ENCODE measurements at regions of chr17 and their contacts with region 1.

Region 1: DNA sequence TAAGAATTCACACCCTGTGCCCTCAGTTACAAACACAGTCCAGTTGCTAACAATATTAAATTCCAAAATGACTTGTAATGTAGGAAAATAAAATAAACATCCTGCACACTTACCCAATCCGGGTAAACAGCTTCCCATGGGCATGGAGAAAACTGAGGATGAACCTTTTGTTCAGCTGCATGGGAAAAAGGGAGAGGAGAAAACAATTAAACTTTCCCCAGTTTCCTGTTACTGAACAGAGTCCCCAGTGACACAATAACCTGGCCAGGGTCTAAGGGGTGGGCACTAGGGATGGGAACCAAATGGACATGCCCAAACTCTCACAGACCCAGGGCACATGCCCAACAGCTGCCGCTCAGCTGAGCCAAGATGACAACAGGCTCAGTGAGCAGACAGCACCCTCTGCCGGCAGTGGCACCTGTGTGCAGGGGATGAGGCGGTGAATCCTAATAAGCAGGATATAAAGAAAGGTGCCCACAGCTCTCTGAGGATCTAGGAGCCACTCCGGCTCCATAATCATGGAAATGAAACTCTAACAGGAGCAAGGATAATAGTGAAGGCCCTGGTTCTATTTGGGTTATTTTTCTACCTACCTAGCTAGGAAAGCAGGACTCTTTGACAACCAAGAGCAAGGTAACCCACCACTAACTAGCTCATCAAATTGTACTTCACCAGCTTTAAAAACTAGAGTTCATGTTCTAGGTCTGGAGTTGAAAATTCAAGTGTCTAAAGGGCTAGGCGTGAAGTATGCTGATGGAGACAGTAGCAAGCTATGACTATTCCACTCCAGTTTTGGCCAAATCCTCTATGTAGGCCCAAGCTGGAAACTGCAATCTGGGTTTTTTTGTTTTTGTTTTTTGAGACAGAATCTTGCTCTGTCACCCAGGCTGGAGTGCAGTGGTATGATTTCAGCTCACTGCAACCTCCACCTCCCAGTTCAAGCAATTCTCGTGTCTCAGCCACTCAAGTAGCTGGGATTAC is 58.8 kb downstream of the SMG6 start:
- DNase-seq: peak; percentile 75
- H3K4me3 Mint-ChIP-seq: no peak overlapping the region
- H3K27ac Mint-ChIP-seq: peak overlapping the region; percentile 76
- H3K4me1 Mint-ChIP-seq: peaks cover 70% of the 10 kb centered on the region
- H3K27me3 Mint-ChIP-seq: no peaks in the 10 kb centered on the region

Region 2: GRCh38 chr17:2070241-2071023 is 174.4 kb before region 1 on chr17:
- intact Hi-C with region 1: loop called (anchors 1 kb)
- DNase-seq: peak; percentile 68
- H3K4me3 Mint-ChIP-seq: peak overlapping the region; percentile 58
- H3K27ac Mint-ChIP-seq: peak overlapping the region; percentile 92
- H3K4me1 Mint-ChIP-seq: peaks cover 58% of the 10 kb centered on the region
- H3K27me3 Mint-ChIP-seq: no peaks in the 10 kb centered on the region

Region 3: GRCh38 chr17:2195729-2196128 is 49.1 kb before region 1 on chr17:
- intact Hi-C with region 1: loop called (anchors 1 kb)
- DNase-seq: peak; percentile 16
- H3K4me3 Mint-ChIP-seq: peak overlapping the region; percentile 1
- H3K27ac Mint-ChIP-seq: peak overlapping the region; percentile 70
- H3K4me1 Mint-ChIP-seq: peaks cover 47% of the 10 kb centered on the region
- H3K27me3 Mint-ChIP-seq: no peaks in the 10 kb centered on the region

Region 4: GRCh38 chr17:2215616-2216364 is 29.0 kb before region 1 on chr17:
- intact Hi-C with region 1: loop called (anchors 1 kb)
- DNase-seq: peak; percentile 69
- H3K4me3 Mint-ChIP-seq: peak overlapping the region; percentile 80
- H3K27ac Mint-ChIP-seq: peak overlapping the region; percentile 96
- H3K4me1 Mint-ChIP-seq: peaks cover 57% of the 10 kb centered on the region
- H3K27me3 Mint-ChIP-seq: no peaks in the 10 kb centered on the region

Region 5: DNA sequence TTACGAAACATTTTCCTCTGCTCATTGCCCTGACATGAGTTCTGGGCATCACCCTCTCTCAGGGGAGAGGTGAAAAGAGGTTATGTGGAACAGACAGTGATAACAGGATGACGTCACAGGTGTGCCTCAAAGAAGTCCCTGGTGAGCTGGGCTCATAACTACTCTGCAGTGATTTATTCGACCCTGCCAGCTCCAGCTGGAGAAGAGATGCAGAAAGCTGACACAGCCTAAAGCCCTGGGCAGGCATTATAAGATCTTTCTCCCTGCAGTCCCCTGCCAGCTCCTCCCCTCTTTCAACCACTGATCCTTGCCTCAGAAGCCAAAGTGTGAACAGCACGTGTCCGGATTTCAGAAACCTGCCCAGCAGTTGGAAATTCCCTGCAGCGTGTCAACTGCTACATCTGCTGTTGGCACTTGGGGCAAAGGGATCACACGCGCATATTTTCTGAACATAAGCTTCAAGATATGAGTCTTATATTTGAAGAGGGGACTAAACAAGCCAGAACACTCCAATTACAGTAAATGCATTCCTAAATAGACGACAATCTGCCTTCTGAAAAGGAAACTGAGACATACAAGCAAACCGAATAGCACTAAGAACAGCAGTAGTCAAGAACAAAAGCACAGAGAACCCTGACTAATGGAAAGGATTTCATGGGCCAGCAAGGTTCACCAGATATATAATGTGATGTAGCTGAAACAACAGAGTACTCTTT is 21.8 kb before region 1 on chr17:
- intact Hi-C with region 1: loop called (anchors 1 kb)
- DNase-seq: peak; percentile 78
- H3K4me3 Mint-ChIP-seq: peak overlapping the region; percentile 65
- H3K27ac Mint-ChIP-seq: peak overlapping the region; percentile 84
- H3K4me1 Mint-ChIP-seq: peaks cover 60% of the 10 kb centered on the region
- H3K27me3 Mint-ChIP-seq: no peaks in the 10 kb centered on the region

Region 6: DNA sequence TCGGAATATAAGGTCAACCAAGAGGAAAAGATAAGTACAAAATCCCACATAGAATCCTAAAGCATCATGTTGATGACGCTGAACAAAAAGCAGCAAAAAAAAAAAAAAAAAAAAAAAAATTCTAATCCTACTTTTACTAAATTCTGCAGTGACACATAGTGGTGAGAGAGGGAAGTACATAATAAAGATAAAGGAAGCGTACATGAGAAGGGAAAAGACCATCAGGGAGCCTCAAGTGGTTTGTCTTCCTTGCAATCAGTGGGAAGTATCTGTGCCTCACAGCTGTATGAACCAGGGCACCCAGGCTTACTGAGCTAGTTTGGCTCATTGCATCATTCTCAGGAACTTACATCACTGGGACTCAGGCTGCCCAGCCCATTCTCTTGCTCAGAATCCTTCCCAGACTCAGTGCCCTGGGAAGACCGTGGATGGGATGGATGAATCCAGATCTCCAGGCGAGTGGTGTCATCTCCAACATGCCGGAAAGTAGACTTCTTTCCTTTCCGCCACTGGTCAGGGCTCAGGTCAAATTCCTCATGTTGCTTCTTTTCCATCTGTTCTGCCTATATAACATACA is 37.5 kb after region 1 on chr17:
- intact Hi-C with region 1: loop called (anchors 1 kb)
- DNase-seq: no peak
- H3K4me3 Mint-ChIP-seq: no peak overlapping the region
- H3K27ac Mint-ChIP-seq: peak overlapping the region; percentile 76
- H3K4me1 Mint-ChIP-seq: peaks cover 45% of the 10 kb centered on the region
- H3K27me3 Mint-ChIP-seq: no peaks in the 10 kb centered on the region

Measured in activated T-helper 1 cell treated with anti-CD3 and anti-CD28 coated beads, Interleukin-12 subunit alpha, Interleukin-12 subunit beta, Interleukin-2, Interleukin-4 antibody, amounts not matched to agents 30 ng/mL and 10 ng/mL and 1 ng/mL, durations not matched to agents 14 hours and 24 hours and 36 hours (primary cell).